Endothelial cell of umbilical vein (primary cell): ENCODE measurements at regions of chr2 and their contacts with region 1.

Region 1: DNA sequence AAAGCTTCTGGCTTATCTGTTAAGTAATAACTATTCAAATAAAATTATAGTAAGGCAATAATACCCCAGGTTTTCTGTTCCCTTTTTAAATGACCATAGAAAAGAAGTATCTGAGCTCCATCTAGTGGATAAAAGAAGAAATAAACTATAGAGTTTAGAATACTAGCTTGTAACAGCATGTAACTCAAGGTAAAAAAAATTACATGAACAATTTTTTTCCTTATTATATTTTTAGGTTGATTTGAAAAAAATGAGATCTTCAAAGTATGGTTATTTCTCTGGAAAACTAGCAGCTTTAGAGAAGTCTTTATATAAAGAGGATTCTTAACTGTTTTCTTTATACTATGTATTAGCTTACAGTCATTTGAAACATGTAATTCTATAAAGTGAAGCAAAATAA is 58.1 kb downstream of the NCKAP1 start:
- DNase-seq: peak; percentile 44
- H3K4me3 ChIP-seq: no peak overlapping the region
- H3K27ac ChIP-seq: no peak overlapping the region
- H3K4me1 ChIP-seq: no peaks in the 10 kb centered on the region
- H3K27me3 ChIP-seq: no peaks in the 10 kb centered on the region
- CTCF ChIP-seq: peak; percentile 7 to 9
- POLR2A ChIP-seq: no peak

Region 2: GRCh38 chr2:182666674-182667314 is 313.3 kb before region 1 on chr2:
- CTCF ChIA-PET with region 1: interaction called, 41 read pairs
- POLR2A ChIA-PET with region 1: no interaction called
- dilution Hi-C with region 1: no loop called
- intact Hi-C with region 1: loop called (anchors 2 kb)
- DNase-seq: peak; percentile 47
- H3K4me3 ChIP-seq: no peak overlapping the region
- H3K27ac ChIP-seq: no peak overlapping the region
- H3K4me1 ChIP-seq: no peaks in the 10 kb centered on the region
- H3K27me3 ChIP-seq: no peaks in the 10 kb centered on the region
- CTCF ChIP-seq: peak; percentile 35 to 62
- POLR2A ChIP-seq: no peak

Region 3: GRCh38 chr2:182784777-182785176 is 195.3 kb before region 1 on chr2:
- CTCF ChIA-PET with region 1: interaction called, 49 read pairs
- POLR2A ChIA-PET with region 1: no interaction called
- dilution Hi-C with region 1: no loop called
- intact Hi-C with region 1: loop called (anchors 1 kb)
- DNase-seq: peak; percentile 65
- H3K4me3 ChIP-seq: no peak overlapping the region
- H3K27ac ChIP-seq: no peak overlapping the region
- H3K4me1 ChIP-seq: peaks cover 2% of the 10 kb centered on the region
- H3K27me3 ChIP-seq: no peaks in the 10 kb centered on the region
- CTCF ChIP-seq: peak; percentile 24 to 38
- POLR2A ChIP-seq: no peak

Region 4: DNA sequence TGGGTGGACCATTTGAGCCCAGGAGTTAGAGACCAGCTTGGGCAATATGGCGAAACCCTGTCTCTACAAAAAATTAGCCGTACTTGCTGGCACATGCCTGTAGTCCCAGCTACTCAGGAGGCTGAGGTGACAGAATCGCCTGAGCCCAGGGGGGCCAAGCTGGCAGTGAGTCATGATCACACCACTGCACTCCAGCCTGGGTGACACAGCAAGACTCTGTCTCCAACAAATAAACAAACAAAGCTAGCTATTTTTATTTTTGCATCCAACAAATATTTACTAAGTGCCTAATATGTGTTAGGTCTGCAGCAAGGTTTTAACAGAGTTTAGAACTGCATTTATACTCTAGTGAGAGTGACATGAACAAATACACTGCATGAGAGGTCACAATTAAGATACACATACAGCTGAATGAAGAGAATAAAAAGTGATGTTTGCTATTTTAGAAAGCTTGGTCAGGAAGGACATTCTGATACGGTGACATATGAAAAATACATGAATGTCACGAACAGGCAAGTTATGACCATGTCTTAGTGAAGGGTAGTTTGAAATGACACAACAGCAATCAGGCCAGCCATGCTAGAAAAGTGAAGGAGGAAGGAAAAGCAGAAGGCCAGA is 30.4 kb before region 1 on chr2:
- CTCF ChIA-PET with region 1: interaction called, 15 read pairs
- POLR2A ChIA-PET with region 1: no interaction called
- dilution Hi-C with region 1: no loop called
- intact Hi-C with region 1: no loop called
- DNase-seq: peak; percentile 11
- H3K4me3 ChIP-seq: no peak overlapping the region
- H3K27ac ChIP-seq: no peak overlapping the region
- H3K4me1 ChIP-seq: peaks cover 19% of the 10 kb centered on the region
- H3K27me3 ChIP-seq: no peaks in the 10 kb centered on the region
- CTCF ChIP-seq: no peak
- POLR2A ChIP-seq: no peak

Region 5: GRCh38 chr2:183014005-183014404 is 33.9 kb after region 1 on chr2:
- CTCF ChIA-PET with region 1: interaction called, 11 read pairs
- POLR2A ChIA-PET with region 1: no interaction called
- dilution Hi-C with region 1: no loop called
- intact Hi-C with region 1: no loop called
- DNase-seq: no peak
- H3K4me3 ChIP-seq: no peak overlapping the region
- H3K27ac ChIP-seq: no peak overlapping the region
- H3K4me1 ChIP-seq: no peaks in the 10 kb centered on the region
- H3K27me3 ChIP-seq: no peaks in the 10 kb centered on the region
- CTCF ChIP-seq: no peak
- POLR2A ChIP-seq: no peak